ENCODE measurements at regions of chr3 and their contacts with region 1.

Region 1: DNA sequence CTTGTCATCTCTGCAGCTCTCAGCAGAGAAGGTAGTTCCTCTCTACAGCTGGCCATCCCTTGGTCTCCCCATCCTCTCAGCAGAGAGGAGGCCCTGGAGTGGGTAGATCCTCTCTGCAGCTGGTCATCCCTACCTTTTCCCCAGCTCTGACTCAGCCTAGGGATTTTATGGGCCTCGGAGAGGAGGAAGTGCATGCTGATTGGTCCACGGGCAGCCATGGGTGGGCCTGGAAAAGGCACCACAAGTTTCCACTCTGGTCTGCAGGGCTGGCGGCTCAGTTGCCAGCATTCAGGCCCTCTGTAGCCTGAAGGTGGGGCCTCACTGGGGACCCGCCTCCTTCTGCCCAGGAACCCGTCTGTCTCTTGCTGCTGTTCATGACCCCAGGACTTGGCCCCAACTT is 36.9 kb downstream of the NR1D2 start:
- DNase-seq: no peak
- ATAC-seq: no peak
- H3K4me3 ChIP-seq: no peak overlapping the region
- H3K4me3 Mint-ChIP-seq: no peak overlapping the region
- H3K27ac ChIP-seq: no peak overlapping the region
- H3K27ac Mint-ChIP-seq: no peak overlapping the region
- H3K4me1 ChIP-seq: peaks cover 0 to 2% of the 10 kb centered on the region in 2 donors
- H3K4me1 Mint-ChIP-seq: peaks cover 7% of the 10 kb centered on the region
- H3K27me3 ChIP-seq: no peaks in the 10 kb centered on the region
- H3K27me3 Mint-ChIP-seq: no peaks in the 10 kb centered on the region
- CTCF ChIP-seq: no peak

Region 2: GRCh38 chr3:23964537-23965235 is 17.3 kb before region 1 on chr3:
- CTCF ChIA-PET with region 1: no interaction called
- POLR2A ChIA-PET with region 1: interaction called, 13 read pairs
- intact Hi-C with region 1: no loop called
- DNase-seq: no peak
- ATAC-seq: no peak
- H3K4me3 ChIP-seq: no peak overlapping the region
- H3K4me3 Mint-ChIP-seq: no peak overlapping the region
- H3K27ac ChIP-seq: no peak overlapping the region
- H3K27ac Mint-ChIP-seq: no peak overlapping the region
- H3K4me1 ChIP-seq: no peaks in the 10 kb centered on the region
- H3K4me1 Mint-ChIP-seq: no peaks in the 10 kb centered on the region
- H3K27me3 ChIP-seq: no peaks in the 10 kb centered on the region
- H3K27me3 Mint-ChIP-seq: no peaks in the 10 kb centered on the region
- CTCF ChIP-seq: no peak

Region 3: GRCh38 chr3:24042174-24043059 is 60.5 kb after region 1 on chr3:
- CTCF ChIA-PET with region 1: no interaction called
- POLR2A ChIA-PET with region 1: no interaction called
- intact Hi-C with region 1: no loop called
- DNase-seq: no peak
- ATAC-seq: no peak
- H3K4me3 ChIP-seq: no peak overlapping the region
- H3K4me3 Mint-ChIP-seq: no peak overlapping the region
- H3K27ac ChIP-seq: no peak overlapping the region
- H3K27ac Mint-ChIP-seq: no peak overlapping the region
- H3K4me1 ChIP-seq: no peaks in the 10 kb centered on the region
- H3K4me1 Mint-ChIP-seq: peaks cover 2% of the 10 kb centered on the region
- H3K27me3 ChIP-seq: no peaks in the 10 kb centered on the region
- H3K27me3 Mint-ChIP-seq: peaks cover 6% of the 10 kb centered on the region
- CTCF ChIP-seq: no peak